ENCODE measurements at regions of chr1 and their contacts with region 1.

Region 1: GRCh38 chr1:24294757-24295371 is 24.3 kb upstream of the GRHL3 start:
- DNase-seq: peak; percentile 75
- ATAC-seq: peak; percentile 94

Region 2: GRCh38 chr1:22861764-22862440 is 1433.0 kb before region 1 on chr1:
- intact Hi-C with region 1: no loop called
- DNase-seq: peak; percentile 69
- ATAC-seq: peak; percentile 85

Region 3: GRCh38 chr1:26059906-26060305 is 1765.0 kb after region 1 on chr1:
- intact Hi-C with region 1: loop called (anchors 5 kb)
- DNase-seq: no peak
- ATAC-seq: no peak